PC-9 (cell line): ENCODE measurements at regions of chr2 and their contacts with region 1.

Region 1: DNA sequence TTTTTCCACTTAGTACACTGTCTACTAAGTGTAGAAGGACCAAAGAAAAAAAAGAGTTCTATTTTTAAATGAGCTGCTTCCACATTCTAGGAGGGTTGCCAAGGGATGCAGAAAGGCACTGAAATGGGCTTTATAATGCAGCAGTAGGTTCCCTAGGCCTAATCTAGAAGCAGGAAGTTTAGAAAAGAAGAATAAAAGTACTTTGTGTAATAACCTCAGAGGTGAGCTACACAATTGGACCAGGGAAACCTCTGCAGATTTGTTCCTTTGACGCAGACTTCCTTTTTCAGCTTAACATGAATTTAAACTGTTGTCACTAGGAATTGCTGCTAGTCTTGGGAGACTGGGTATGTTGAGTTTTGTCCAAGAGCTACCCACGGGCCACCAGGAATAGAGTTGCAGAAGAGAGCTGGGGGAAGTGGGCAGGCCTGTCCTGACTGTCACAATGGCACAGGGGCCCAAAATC is 34.6 kb upstream of the RAB1A start:
- DNase-seq: no peak
- H3K4me3 ChIP-seq: no peak overlapping the region
- H3K27ac ChIP-seq: no peak overlapping the region
- H3K4me1 ChIP-seq: peaks cover 10% of the 10 kb centered on the region
- H3K27me3 ChIP-seq: no peaks in the 10 kb centered on the region
- CTCF ChIP-seq: no peak

Region 2: DNA sequence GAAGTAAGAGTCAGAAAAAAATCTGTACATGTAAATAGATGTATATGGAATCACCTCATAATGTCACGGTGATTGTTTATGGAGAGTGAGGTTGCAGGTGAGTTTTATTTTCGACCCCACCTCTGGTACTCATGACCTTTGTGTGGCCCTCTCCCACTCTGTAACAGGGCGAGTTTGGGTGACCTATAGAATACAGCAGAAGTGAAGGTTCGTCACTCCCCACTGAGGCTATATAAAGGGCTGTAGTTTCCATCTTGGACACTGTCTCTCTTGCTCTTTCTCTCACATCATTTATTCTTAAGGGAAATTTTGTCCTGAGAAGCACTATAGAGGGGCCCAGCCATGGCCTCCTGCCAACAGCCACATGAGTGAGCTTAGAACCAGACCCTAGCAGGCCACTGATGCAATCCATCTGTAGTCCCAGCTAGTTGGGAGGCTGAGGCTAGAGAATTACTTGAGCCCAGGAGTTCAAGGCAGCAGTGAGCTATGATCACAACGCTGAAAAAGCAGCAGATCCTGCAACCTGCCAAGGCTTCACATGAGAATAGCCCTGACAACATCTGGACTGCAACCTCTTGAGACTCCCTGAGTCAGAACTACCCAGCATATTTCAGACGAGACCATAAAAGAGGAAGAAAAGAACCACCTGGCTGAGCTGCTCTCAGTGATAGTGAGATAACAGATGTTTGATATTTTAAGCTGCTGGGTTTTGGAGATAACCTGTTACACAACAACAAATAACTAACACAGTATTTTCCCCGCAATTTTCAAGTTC is 249.5 kb before region 1 on chr2:
- CTCF ChIA-PET with region 1: interaction called, 7 read pairs
- POLR2A ChIA-PET with region 1: no interaction called
- intact Hi-C with region 1: loop called (anchors 5 kb)
- DNase-seq: no peak
- H3K4me3 ChIP-seq: no peak overlapping the region
- H3K27ac ChIP-seq: no peak overlapping the region
- H3K4me1 ChIP-seq: no peaks in the 10 kb centered on the region
- H3K27me3 ChIP-seq: no peaks in the 10 kb centered on the region
- CTCF ChIP-seq: no peak

Region 3: DNA sequence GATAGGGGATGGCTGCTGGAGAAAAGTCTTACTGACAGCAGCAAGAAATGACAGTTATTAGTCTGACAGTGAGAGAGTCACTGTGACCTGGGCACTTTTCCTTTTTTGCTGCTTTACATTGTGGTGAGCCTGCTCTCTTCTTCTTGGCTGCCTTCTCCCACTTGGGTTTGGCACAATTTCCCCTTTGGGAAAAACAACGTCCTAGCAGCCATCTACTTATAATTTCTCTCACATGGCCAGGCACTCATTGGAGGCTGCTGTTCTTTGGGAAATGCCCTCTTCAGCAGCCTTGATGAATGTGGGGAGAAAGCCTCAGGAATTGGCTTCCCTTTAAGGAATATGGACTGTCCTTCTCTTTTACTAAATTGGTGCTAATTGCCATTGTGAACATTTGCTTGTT is 235.6 kb before region 1 on chr2:
- CTCF ChIA-PET with region 1: no interaction called
- POLR2A ChIA-PET with region 1: no interaction called
- intact Hi-C with region 1: no loop called
- DNase-seq: no peak
- H3K4me3 ChIP-seq: no peak overlapping the region
- H3K27ac ChIP-seq: no peak overlapping the region
- H3K4me1 ChIP-seq: no peaks in the 10 kb centered on the region
- H3K27me3 ChIP-seq: peaks cover 36% of the 10 kb centered on the region
- CTCF ChIP-seq: no peak

Region 4: DNA sequence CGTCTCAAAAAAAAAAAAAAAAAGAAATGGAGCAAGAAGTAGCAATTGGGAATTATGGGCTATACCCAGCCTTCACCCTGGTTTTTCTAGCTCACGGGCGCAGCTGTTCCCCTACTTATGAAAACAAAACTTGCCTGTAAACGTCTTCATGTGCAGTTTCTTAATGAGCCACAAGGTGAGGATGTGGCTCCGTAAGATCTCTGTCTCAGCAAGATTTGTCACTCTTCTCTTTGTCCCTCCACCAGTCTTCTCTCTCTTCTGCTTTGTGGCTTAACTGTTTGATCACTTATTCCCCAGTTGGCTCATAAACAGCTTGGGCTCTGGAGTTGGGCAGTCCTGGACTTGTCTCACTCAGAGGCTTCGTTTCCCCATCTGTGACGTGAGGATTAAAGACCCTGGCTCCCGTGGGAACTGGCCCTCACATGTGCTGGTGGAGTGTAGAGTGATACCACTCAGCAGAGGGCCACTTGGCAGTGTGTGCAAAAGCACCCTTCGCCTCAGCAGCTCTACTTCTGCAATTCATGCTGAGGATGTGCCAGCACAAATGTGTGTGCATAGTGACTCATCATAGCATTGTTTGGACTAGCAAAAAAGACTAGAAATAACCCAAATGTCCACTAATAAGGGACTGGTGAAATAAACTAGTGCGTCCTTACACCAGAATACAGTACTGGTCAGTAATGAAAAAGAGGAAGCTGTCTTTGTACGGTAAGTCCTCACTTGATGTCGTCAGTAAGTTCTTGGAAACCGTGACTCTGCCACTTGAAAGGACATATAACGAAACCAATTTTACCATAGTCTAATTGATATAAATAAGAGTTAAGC is 99.5 kb before region 1 on chr2:
- CTCF ChIA-PET with region 1: no interaction called
- POLR2A ChIA-PET with region 1: no interaction called
- intact Hi-C with region 1: loop called (anchors 10 kb)
- DNase-seq: peak in 1 of 2 experiments; percentile 22
- H3K4me3 ChIP-seq: no peak overlapping the region
- H3K27ac ChIP-seq: peak overlapping the region; percentile 2; the same call in 1 of the 2 replicates
- H3K4me1 ChIP-seq: peaks cover 17% of the 10 kb centered on the region
- H3K27me3 ChIP-seq: no peaks in the 10 kb centered on the region
- CTCF ChIP-seq: peak; percentile 66

Region 5: DNA sequence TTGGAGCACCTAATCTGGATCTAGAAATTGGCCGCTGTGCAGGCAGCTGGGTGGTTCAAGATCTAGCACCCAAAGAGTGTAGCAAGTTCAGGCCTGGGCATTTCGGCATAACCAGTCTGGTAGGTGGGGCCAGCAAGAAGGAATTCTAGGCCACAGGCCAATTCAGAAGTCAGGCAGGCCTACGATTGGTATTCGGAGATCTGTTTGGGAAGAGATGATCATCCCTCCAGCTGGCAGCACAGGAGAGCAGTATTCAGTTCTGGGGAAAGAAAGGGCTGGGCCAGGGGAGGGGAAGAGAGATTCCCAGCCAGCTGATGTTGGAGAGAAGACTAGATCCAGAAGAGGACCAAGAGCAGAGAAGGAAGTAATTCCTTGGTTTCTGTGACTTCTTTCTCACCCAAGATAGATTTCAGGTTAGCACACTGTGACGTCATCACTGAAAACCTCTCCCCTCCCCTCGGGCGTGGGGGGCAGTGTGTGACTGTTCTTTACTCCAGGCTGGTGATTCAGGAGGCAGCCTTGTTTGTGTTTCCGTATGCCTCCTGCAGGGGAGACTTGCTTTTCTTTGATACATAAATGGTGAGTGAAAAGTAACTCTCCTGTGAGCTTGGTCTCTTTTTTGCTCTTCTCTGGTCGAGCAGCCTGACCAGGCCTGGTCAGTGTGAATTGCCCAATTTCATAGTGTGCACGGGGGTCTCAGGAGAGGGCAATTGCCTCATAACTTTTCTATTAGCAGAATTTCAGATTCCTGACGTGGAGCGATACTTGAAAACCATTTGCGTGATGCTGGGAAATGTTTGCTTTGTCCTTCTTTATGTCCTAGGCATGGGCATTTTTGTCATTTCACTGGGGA is 1331.6 kb after region 1 on chr2:
- CTCF ChIA-PET with region 1: no interaction called
- POLR2A ChIA-PET with region 1: interaction called, 11 read pairs
- intact Hi-C with region 1: no loop called
- DNase-seq: peak; percentile 89 to 92
- H3K4me3 ChIP-seq: peak overlapping the region; percentile 32; the same call in 1 of the 2 replicates
- H3K27ac ChIP-seq: peak overlapping the region; percentile 91
- H3K4me1 ChIP-seq: peaks cover 46% of the 10 kb centered on the region
- H3K27me3 ChIP-seq: no peaks in the 10 kb centered on the region
- CTCF ChIP-seq: peak; percentile 55; the same call in 1 of the 2 replicates